ENCODE measurements at regions of chr11 and their contacts with region 1.

Region 1: GRCh38 chr11:62025487-62026105 is 58.2 kb upstream of the FTH1 start:
- DNase-seq: peak; percentile 93
- ATAC-seq: peak; percentile 83
- H3K4me3 ChIP-seq: peak overlapping the region in 3 of 5 experiments; percentile 6 to 30 (median 12)
- H3K4me3 Mint-ChIP-seq: peak overlapping the region; percentile 56
- H3K27ac ChIP-seq: peak overlapping the region; percentile 75 to 79
- H3K27ac Mint-ChIP-seq: peak overlapping the region; percentile 87
- H3K4me1 ChIP-seq: peaks cover 15 to 19% of the 10 kb centered on the region in 2 donors
- H3K4me1 Mint-ChIP-seq: peaks cover 23% of the 10 kb centered on the region
- H3K27me3 ChIP-seq: peaks cover 0 to 4% (median 0%) of the 10 kb centered on the region in 4 experiments
- H3K27me3 Mint-ChIP-seq: peaks cover 3% of the 10 kb centered on the region
- CTCF ChIP-seq: no peak

Region 2: DNA sequence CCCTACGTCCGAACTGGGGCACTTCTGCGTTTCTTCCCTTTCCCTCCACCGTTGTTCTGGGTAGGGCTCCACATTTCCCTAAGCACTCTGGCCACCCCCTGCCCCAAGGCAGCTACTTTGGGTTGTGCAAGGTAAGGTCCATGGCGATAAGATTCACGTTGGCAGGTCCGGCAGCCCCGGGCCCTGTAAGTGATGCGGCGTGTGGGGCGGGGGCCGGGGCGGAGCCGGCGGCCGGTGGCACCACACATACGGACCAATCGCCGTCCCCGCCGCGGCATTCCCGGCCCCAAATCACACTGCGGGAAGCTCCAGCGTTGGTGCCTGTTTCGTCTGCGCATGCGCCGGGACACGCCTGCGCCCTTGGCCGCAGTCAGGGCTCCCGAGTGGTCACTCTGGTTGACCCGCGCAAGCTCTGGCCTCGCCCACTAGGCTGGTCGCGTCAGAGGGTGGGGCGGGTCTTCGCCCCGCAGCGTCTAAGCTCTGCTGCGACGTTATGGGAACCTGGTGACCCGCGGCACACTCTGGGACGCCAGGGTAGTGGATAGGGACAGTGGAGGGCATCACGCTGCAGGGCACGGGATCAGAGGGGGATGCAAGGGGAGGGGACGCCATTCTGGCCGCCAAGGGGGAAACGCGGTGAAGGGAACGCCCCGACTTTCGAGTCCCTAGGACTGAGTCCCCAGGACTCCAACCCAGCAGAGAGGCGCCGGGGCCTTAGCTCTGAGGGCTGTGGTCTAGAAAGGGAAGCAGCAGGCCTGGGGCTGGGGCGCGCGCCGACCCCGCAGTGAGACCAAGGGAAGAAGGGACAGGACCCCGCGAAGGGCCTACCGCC is 210.4 kb before region 1 on chr11:
- CTCF ChIA-PET with region 1: no interaction called
- POLR2A ChIA-PET with region 1: no interaction called
- intact Hi-C with region 1: no loop called
- DNase-seq: peak; percentile 61
- ATAC-seq: peak; percentile 57
- H3K4me3 ChIP-seq: peak overlapping the region; percentile 56 to 77 (median 70)
- H3K4me3 Mint-ChIP-seq: peak overlapping the region; percentile 96
- H3K27ac ChIP-seq: peak overlapping the region in 1 of 2 donors; percentile 17
- H3K27ac Mint-ChIP-seq: peak overlapping the region; percentile 88
- H3K4me1 ChIP-seq: peaks cover 9 to 24% of the 10 kb centered on the region in 2 donors
- H3K4me1 Mint-ChIP-seq: peaks cover 15% of the 10 kb centered on the region
- H3K27me3 ChIP-seq: peaks cover 0 to 17% (median 4%) of the 10 kb centered on the region in 4 experiments
- H3K27me3 Mint-ChIP-seq: no peaks in the 10 kb centered on the region
- CTCF ChIP-seq: no peak

Region 3: GRCh38 chr11:62044639-62045121 is 19.1 kb after region 1 on chr11:
- CTCF ChIA-PET with region 1: no interaction called
- POLR2A ChIA-PET with region 1: no interaction called
- intact Hi-C with region 1: loop called (anchors 1 kb)
- DNase-seq: no peak
- ATAC-seq: no peak
- H3K4me3 ChIP-seq: no peak overlapping the region
- H3K4me3 Mint-ChIP-seq: no peak overlapping the region
- H3K27ac ChIP-seq: no peak overlapping the region
- H3K27ac Mint-ChIP-seq: no peak overlapping the region
- H3K4me1 ChIP-seq: peaks cover 22 to 29% of the 10 kb centered on the region in 2 donors
- H3K4me1 Mint-ChIP-seq: peaks cover 32% of the 10 kb centered on the region
- H3K27me3 ChIP-seq: peaks cover 0 to 4% (median 2%) of the 10 kb centered on the region in 4 experiments
- H3K27me3 Mint-ChIP-seq: peaks cover 12% of the 10 kb centered on the region
- CTCF ChIP-seq: no peak

Measured in B cell (primary cell).